ENCODE measurements at regions of chr10 and their contacts with region 1.

Region 1: DNA sequence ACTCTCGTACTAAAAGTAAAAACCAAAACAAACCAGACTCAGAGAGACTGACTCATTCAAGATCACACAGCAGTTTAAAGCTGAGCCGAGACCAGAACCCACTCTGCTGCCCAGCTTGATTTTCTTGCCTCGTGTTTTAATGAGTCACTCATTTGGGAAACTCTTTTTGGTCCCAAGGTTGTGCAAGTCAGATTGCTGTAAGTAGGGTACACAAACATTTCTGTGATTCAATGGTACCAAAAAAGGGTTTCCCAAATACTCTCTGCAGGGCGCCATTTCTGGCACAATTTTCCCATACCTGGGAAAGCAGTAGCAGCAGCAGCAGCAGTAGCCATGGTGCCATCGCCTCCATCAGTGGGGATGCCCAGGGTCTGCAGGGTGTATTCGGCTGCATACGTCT is 69.9 kb downstream of the ASAH2B start:
- DNase-seq: no peak
- ATAC-seq: no peak
- H3K4me3 ChIP-seq: no peak overlapping the region
- H3K4me3 Mint-ChIP-seq: no peak overlapping the region
- H3K27ac ChIP-seq: no peak overlapping the region
- H3K27ac Mint-ChIP-seq: no peak overlapping the region
- H3K4me1 ChIP-seq: no peaks in the 10 kb centered on the region
- H3K4me1 Mint-ChIP-seq: no peaks in the 10 kb centered on the region
- H3K27me3 ChIP-seq: no peaks in the 10 kb centered on the region
- H3K27me3 Mint-ChIP-seq: peaks cover 5% of the 10 kb centered on the region
- CTCF ChIP-seq: no peak

Region 2: DNA sequence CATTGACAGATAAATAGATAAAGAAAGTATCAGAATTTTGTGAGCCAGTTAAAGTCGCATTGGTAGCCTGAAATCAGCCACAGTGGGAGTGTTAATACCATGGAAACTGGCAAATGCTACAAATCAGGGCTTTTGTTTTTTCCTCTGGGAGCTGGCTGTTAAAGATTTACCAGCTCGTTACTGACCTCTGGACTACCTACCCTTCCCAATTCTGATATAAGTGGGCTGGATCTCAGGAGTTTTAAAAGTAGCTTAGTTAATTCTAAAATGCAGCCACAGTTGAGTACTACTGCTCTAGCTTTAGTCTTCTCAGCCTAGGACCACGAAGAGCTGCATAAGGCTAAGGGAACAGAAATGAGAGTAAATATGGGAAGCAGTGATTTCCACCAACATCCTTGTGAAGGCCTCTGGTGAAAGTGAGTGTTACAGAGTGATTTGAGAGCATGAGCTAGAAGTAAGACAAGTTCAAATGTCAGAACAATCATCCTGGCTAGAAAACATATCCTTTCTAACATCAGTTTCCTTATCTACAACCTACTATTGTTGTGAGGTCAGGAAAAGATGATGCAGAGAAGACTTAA is 22.7 kb after region 1 on chr10:
- CTCF ChIA-PET with region 1: no interaction called
- POLR2A ChIA-PET with region 1: no interaction called
- intact Hi-C with region 1: loop called in 1 of 2 experiments (anchors 2 kb)
- DNase-seq: no peak
- ATAC-seq: no peak
- H3K4me3 ChIP-seq: no peak overlapping the region
- H3K4me3 Mint-ChIP-seq: no peak overlapping the region
- H3K27ac ChIP-seq: no peak overlapping the region
- H3K27ac Mint-ChIP-seq: no peak overlapping the region
- H3K4me1 ChIP-seq: no peaks in the 10 kb centered on the region
- H3K4me1 Mint-ChIP-seq: no peaks in the 10 kb centered on the region
- H3K27me3 ChIP-seq: no peaks in the 10 kb centered on the region
- H3K27me3 Mint-ChIP-seq: peaks cover 10% of the 10 kb centered on the region
- CTCF ChIP-seq: no peak

Region 3: DNA sequence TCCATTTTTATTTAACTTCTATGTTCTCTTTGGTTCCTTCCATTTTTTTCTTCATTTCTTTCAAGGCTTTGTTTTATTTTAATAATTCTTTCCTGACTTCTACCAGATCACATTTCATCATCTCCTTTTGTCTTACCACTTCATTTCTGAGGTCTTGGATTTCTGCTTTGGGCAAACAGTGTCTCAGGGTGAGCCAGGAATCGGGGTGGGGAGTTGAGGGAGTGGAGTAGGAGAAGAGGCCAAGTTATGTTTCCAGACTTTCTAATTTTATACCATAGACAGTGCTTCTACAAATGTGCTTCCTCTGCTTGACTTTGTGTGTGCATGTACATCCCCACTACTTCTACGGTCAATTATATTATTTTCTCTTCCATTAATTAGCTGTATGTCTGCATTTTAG is 376.8 kb after region 1 on chr10:
- CTCF ChIA-PET with region 1: no interaction called
- POLR2A ChIA-PET with region 1: no interaction called
- intact Hi-C with region 1: no loop called
- DNase-seq: no peak
- ATAC-seq: no peak
- H3K4me3 ChIP-seq: no peak overlapping the region
- H3K4me3 Mint-ChIP-seq: no peak overlapping the region
- H3K27ac ChIP-seq: no peak overlapping the region
- H3K27ac Mint-ChIP-seq: no peak overlapping the region
- H3K4me1 ChIP-seq: no peaks in the 10 kb centered on the region
- H3K4me1 Mint-ChIP-seq: no peaks in the 10 kb centered on the region
- H3K27me3 ChIP-seq: no peaks in the 10 kb centered on the region
- H3K27me3 Mint-ChIP-seq: no peaks in the 10 kb centered on the region
- CTCF ChIP-seq: no peak

Region 4: DNA sequence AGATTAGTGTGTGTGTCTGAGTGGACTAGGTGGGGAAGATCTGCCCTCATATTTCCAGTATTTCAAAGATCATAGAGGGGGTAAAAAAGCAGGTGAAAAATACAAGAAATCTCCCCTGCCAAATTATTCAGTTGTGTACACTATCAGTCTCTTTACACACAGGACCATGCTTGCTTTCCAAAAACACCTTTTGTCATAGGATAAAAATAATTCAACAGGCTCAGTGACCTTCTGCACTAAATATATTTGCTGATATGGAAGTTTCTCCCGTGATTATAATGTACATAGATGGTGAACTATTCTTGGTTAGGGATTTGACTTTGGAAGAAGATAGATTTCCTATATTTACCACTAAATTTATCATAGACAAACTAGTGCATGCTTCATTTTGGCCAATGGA is 914.4 kb after region 1 on chr10:
- CTCF ChIA-PET with region 1: no interaction called
- POLR2A ChIA-PET with region 1: no interaction called
- intact Hi-C with region 1: no loop called
- DNase-seq: no peak
- ATAC-seq: no peak
- H3K4me3 ChIP-seq: no peak overlapping the region
- H3K4me3 Mint-ChIP-seq: no peak overlapping the region
- H3K27ac ChIP-seq: no peak overlapping the region
- H3K27ac Mint-ChIP-seq: no peak overlapping the region
- H3K4me1 ChIP-seq: no peaks in the 10 kb centered on the region
- H3K4me1 Mint-ChIP-seq: no peaks in the 10 kb centered on the region
- H3K27me3 ChIP-seq: no peaks in the 10 kb centered on the region
- H3K27me3 Mint-ChIP-seq: peaks cover 6% of the 10 kb centered on the region
- CTCF ChIP-seq: no peak

Measured in CD8-positive, alpha-beta T cell (primary cell).